GM12878 (cell line): ENCODE measurements at regions of chr5 and their contacts with region 1.

Region 1: GRCh38 chr5:96752341-96753016 is 55.3 kb downstream of the ERAP1 start:
- DNase-seq: no peak
- ATAC-seq: peak; percentile 63
- H3K4me3 ChIP-seq: no peak overlapping the region
- H3K27ac ChIP-seq: no peak overlapping the region
- H3K4me1 ChIP-seq: no peaks in the 10 kb centered on the region
- H3K27me3 ChIP-seq: no peaks in the 10 kb centered on the region
- CTCF ChIP-seq: peak; percentile 54 to 61 (median 58); a peak in 5 of 6 replicates
- EP300 ChIP-seq: no peak
- POLR2A ChIP-seq: no peak
- RAD21 ChIP-seq: peak; percentile 65

Region 2: GRCh38 chr5:96763026-96763425 is 10.5 kb after region 1 on chr5:
- CTCF ChIA-PET with region 1: interaction called, 35 read pairs
- POLR2A ChIA-PET with region 1: no interaction called
- RAD21 ChIA-PET with region 1: interaction called, 7 read pairs
- SMC1A ChIA-PET with region 1: interaction called, 9 read pairs
- in situ Hi-C with region 1: no loop called
- intact Hi-C with region 1: no loop called
- DNase-seq: no peak
- ATAC-seq: no peak
- H3K4me3 ChIP-seq: no peak overlapping the region
- H3K27ac ChIP-seq: no peak overlapping the region
- H3K4me1 ChIP-seq: no peaks in the 10 kb centered on the region
- H3K27me3 ChIP-seq: no peaks in the 10 kb centered on the region
- CTCF ChIP-seq: no peak
- EP300 ChIP-seq: no peak
- POLR2A ChIP-seq: no peak
- RAD21 ChIP-seq: no peak

Region 3: DNA sequence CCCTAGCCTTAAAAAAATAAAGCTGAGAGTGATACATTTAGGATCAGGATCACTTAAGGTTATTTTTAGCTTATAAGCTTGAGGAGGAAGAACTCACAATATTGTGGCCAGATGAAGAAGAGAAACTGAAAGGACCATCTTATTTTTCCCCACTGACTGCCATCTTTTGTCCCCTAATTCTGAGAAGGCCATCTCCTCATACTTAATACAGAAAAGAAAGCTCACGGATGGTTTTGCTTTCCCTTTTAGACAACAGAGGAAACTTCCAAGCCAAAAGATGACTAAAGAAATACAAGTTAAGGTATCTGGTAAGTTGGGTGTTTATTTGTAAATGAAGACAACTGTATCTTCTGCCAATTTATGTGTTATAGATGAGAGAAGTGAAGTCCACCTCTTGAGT is 18.9 kb after region 1 on chr5:
- CTCF ChIA-PET with region 1: interaction called, 23 read pairs
- POLR2A ChIA-PET with region 1: no interaction called
- RAD21 ChIA-PET with region 1: interaction called, 6 read pairs
- SMC1A ChIA-PET with region 1: interaction called, 3 read pairs
- in situ Hi-C with region 1: no loop called
- intact Hi-C with region 1: no loop called
- DNase-seq: no peak
- ATAC-seq: peak; percentile 36; the same call in 1 of the 3 replicates
- H3K4me3 ChIP-seq: no peak overlapping the region
- H3K27ac ChIP-seq: no peak overlapping the region
- H3K4me1 ChIP-seq: no peaks in the 10 kb centered on the region
- H3K27me3 ChIP-seq: no peaks in the 10 kb centered on the region
- CTCF ChIP-seq: no peak
- EP300 ChIP-seq: no peak
- POLR2A ChIP-seq: no peak
- RAD21 ChIP-seq: no peak

Region 4: GRCh38 chr5:96997265-96997859 is 244.9 kb after region 1 on chr5:
- CTCF ChIA-PET with region 1: interaction called, 7 read pairs
- POLR2A ChIA-PET with region 1: no interaction called
- RAD21 ChIA-PET with region 1: interaction called, 9 read pairs
- SMC1A ChIA-PET with region 1: interaction called, 8 read pairs
- in situ Hi-C with region 1: no loop called
- intact Hi-C with region 1: loop called (anchors 5 kb)
- DNase-seq: no peak
- ATAC-seq: peak; percentile 92
- H3K4me3 ChIP-seq: no peak overlapping the region
- H3K27ac ChIP-seq: no peak overlapping the region
- H3K4me1 ChIP-seq: no peaks in the 10 kb centered on the region
- H3K27me3 ChIP-seq: no peaks in the 10 kb centered on the region
- CTCF ChIP-seq: peak; percentile 24 to 40 (median 40); a peak in 4 of 6 replicates
- EP300 ChIP-seq: no peak
- POLR2A ChIP-seq: no peak
- RAD21 ChIP-seq: peak; percentile 47

Region 5: DNA sequence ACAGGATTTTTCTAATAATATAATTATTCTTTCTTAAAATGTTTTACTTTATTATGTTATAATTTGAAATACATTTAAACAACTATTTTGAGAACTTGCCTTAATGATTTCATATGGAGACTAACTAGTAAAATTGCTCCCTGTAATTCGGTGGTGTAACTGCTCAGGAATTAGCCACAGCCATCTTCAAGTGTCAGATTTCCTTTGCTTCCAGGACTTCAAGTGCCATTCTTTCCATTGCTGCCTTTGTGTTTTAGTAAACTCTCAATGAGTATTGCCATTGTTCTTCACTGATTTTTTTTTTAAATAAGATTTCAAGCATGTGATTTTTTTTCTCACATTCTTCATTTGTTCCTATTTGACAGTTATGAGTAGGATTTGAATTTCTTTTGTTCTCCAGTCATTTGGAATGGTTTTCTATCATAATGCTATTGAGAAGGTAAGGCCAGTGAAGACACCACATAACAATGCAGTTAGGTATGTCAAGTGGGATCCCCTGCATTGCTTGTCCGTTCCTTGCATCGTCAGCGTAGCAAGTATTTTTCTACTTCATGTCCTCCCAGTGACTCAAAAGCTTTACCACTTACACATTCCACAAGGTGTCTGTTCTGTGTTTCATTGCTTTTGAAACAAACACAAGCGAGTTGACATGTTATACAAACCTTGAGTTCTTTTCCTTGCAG is 267.1 kb after region 1 on chr5:
- CTCF ChIA-PET with region 1: interaction called, 5 read pairs
- POLR2A ChIA-PET with region 1: no interaction called
- RAD21 ChIA-PET with region 1: no interaction called
- SMC1A ChIA-PET with region 1: no interaction called
- in situ Hi-C with region 1: no loop called
- intact Hi-C with region 1: loop called (anchors 5 kb)
- DNase-seq: no peak
- ATAC-seq: no peak
- H3K4me3 ChIP-seq: no peak overlapping the region
- H3K27ac ChIP-seq: no peak overlapping the region
- H3K4me1 ChIP-seq: peaks cover 5% of the 10 kb centered on the region; the same call in 1 of the 2 replicates
- H3K27me3 ChIP-seq: no peaks in the 10 kb centered on the region
- CTCF ChIP-seq: no peak
- EP300 ChIP-seq: no peak
- POLR2A ChIP-seq: no peak
- RAD21 ChIP-seq: no peak

Region 6: GRCh38 chr5:97044052-97044451 is 291.6 kb after region 1 on chr5:
- CTCF ChIA-PET with region 1: interaction called, 12 read pairs
- POLR2A ChIA-PET with region 1: no interaction called
- RAD21 ChIA-PET with region 1: interaction called, 3 read pairs
- SMC1A ChIA-PET with region 1: interaction called, 4 read pairs
- in situ Hi-C with region 1: no loop called
- intact Hi-C with region 1: no loop called
- DNase-seq: no peak
- ATAC-seq: peak; percentile 33
- H3K4me3 ChIP-seq: no peak overlapping the region
- H3K27ac ChIP-seq: no peak overlapping the region
- H3K4me1 ChIP-seq: no peaks in the 10 kb centered on the region
- H3K27me3 ChIP-seq: no peaks in the 10 kb centered on the region; a peak in 1 of 4 replicates
- CTCF ChIP-seq: peak in 2 of 3 experiments; percentile 18; a peak in 2 of 6 replicates
- EP300 ChIP-seq: no peak
- POLR2A ChIP-seq: no peak
- RAD21 ChIP-seq: peak; percentile 45